Esophagus squamous epithelium (tissue), 5 donors: ENCODE measurements at regions of chr3 and their contacts with region 1.

Region 1: GRCh38 chr3:101573449-101574387 is at the start of gene PCNP:
- DNase-seq: peak; percentile 89
- H3K4me3 ChIP-seq: peak within 1 kb of the TSS; percentile 71 to 93 (median 87)
- H3K27ac ChIP-seq: peak within 1 kb of the TSS; percentile 95 to 100 (median 99)
- H3K4me1 ChIP-seq: peaks cover 0 to 53% (median 22%) of the 10 kb centered on the region in 3 donors
- H3K27me3 ChIP-seq: no peaks in the 10 kb centered on the region
- CTCF ChIP-seq: peak; percentile 79 to 97 (median 94)
- POLR2A ChIP-seq: peak in 3 of 4 donors; percentile 79 to 88 (median 86)
- total RNA-seq, gene PCNP: 36.2 to 106 (median 56.9) TPM

Region 2: DNA sequence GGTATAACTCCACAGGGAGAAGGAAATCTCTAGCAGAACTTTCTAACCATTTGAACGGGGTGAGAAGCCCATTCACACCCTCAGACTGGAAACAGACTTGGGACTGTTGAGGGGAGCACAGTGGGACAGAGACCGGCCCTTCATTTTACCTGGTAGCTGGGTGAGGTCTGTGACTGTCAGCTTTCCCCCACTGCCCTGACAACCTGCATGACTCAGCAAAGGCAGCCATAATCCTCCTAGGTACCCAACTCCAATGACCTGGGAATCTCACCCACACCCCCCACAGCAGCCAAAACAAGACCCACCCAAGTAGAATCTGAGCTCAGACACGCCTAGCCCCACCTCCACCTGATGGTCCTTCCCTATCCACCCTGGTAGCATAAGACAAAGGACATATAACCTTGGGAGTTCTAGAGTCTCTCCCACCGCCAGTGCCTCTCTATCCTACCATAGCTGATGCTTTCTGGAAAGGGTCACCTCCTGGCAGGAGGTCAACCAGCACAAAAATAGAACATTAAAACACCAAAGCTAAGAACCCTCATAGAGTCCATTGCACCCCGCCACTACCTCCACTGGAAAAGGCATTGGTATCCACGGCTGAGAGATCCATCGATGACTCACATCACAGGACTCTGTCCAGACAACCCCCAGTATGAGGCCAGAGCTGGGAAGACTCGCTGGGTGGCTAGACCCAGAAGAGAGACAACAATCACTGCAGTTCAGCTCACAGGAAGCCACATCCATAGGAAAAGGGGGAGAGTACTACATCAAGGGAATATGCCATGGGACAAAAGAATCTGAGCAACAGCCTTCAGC is 88.7 kb before region 1 on chr3:
- intact Hi-C with region 1: no loop called
- DNase-seq: no peak
- H3K4me3 ChIP-seq: no peak overlapping the region
- H3K27ac ChIP-seq: no peak overlapping the region
- H3K4me1 ChIP-seq: peaks cover 0 to 8% (median 0%) of the 10 kb centered on the region in 3 donors
- H3K27me3 ChIP-seq: no peaks in the 10 kb centered on the region
- CTCF ChIP-seq: no peak
- POLR2A ChIP-seq: no peak

Region 3: GRCh38 chr3:101665357-101665756 is 91.6 kb after region 1 on chr3:
- intact Hi-C with region 1: no loop called
- DNase-seq: no peak
- H3K4me3 ChIP-seq: no peak overlapping the region
- H3K27ac ChIP-seq: no peak overlapping the region
- H3K4me1 ChIP-seq: no peaks in the 10 kb centered on the region
- H3K27me3 ChIP-seq: no peaks in the 10 kb centered on the region
- CTCF ChIP-seq: no peak
- POLR2A ChIP-seq: no peak

Region 4: GRCh38 chr3:101680466-101680865 is 106.7 kb after region 1 on chr3:
- intact Hi-C with region 1: loop called (anchors 5 kb)
- DNase-seq: no peak
- H3K4me3 ChIP-seq: no peak overlapping the region
- H3K27ac ChIP-seq: no peak overlapping the region
- H3K4me1 ChIP-seq: peaks cover 24 to 59% (median 35%) of the 10 kb centered on the region in 3 donors
- H3K27me3 ChIP-seq: no peaks in the 10 kb centered on the region
- CTCF ChIP-seq: no peak
- POLR2A ChIP-seq: no peak

Region 5: GRCh38 chr3:101690972-101691371 is 117.3 kb after region 1 on chr3:
- intact Hi-C with region 1: no loop called
- DNase-seq: no peak
- H3K4me3 ChIP-seq: no peak overlapping the region
- H3K27ac ChIP-seq: peak overlapping the region in 1 of 4 donors; percentile 58
- H3K4me1 ChIP-seq: peaks cover 0 to 31% (median 4%) of the 10 kb centered on the region in 3 donors
- H3K27me3 ChIP-seq: no peaks in the 10 kb centered on the region
- CTCF ChIP-seq: no peak
- POLR2A ChIP-seq: no peak